Panc1 (cell line): ENCODE measurements at regions of chr10 and their contacts with region 1.

Region 1: DNA sequence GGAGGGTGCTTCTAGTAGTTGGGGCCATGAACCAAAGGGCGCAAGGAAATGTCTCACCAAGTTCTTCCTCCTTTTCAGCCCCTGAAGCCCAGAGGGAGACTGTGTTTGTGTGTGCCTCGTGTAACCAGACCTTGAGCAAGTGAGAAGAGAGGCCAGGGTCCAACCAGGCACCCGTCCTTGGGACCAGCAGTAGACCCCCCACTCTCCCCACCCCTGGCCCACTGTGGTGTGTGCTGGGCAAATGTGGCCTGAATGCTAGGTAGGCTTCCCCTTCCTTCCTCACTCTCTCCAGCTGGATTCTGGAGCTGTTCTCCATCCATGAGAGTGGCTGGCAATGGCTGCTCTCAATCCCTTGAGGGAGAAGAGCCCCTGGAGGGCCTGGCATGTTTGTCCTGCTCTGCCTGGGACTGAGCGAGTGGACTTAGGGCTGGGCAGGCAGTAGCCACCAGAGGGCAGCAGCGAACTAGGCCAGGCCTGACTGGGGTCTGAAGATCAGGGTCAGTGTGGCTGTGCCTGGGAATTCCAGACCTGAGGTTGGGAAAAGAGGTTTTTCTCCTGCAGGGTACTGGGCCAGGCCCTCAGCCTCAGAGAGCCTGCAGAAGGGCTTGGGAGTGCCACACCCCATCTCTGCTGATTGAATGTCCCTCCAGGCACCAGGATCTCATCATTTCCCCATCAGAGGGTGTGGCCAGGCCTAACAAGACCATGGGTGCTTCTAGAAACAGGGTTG is 12.5 kb downstream of the SFRP5 start:
- DNase-seq: peak; percentile 32
- ATAC-seq: peak; percentile 93
- H3K4me3 ChIP-seq: no peak overlapping the region
- H3K27ac ChIP-seq: no peak overlapping the region
- H3K4me1 ChIP-seq: no peaks in the 10 kb centered on the region
- H3K27me3 ChIP-seq: no peaks in the 10 kb centered on the region
- CTCF ChIP-seq: peak; percentile 98

Region 2: DNA sequence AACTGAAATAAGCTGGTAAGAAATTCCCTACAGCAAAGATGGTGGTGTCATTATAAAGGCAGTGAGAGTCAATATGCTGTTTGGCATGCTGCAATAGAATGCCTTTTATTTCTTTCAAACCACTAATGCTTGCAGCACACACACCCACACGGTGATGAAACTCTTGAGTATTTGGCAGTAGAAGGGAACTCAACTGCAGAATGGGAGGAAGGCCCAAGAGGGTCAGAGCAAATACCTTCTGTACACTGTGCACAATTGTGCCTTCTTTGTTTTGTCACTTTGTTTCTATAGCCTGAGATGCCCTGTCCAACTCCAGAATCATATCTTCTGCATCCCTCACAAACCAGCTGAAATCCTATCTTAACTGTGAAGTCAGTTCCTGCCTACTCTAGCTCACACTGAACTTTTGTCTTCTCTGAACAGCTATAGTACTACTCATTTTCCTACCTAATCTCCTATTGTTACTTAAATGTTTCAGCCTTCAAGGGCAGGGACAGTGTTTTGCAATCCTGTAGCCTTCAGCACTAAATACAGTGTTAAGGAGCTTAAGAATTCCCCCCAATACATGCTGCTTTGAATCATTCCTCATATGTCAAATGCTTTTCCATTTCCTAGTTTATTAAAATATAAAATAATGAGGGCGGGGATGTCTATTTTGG is 283.3 kb before region 1 on chr10:
- CTCF ChIA-PET with region 1: no interaction called
- POLR2A ChIA-PET with region 1: interaction called, 10 read pairs
- in situ Hi-C with region 1: no loop called
- intact Hi-C with region 1: no loop called
- DNase-seq: no peak
- ATAC-seq: no peak
- H3K4me3 ChIP-seq: no peak overlapping the region
- H3K27ac ChIP-seq: no peak overlapping the region
- H3K4me1 ChIP-seq: peaks cover 5% of the 10 kb centered on the region; the same call in 1 of the 2 replicates
- H3K27me3 ChIP-seq: no peaks in the 10 kb centered on the region
- CTCF ChIP-seq: no peak

Region 3: GRCh38 chr10:97659589-97659988 is 99.7 kb before region 1 on chr10:
- CTCF ChIA-PET with region 1: interaction called, 11 read pairs
- POLR2A ChIA-PET with region 1: no interaction called
- in situ Hi-C with region 1: no loop called
- intact Hi-C with region 1: no loop called
- DNase-seq: no peak
- ATAC-seq: no peak
- H3K4me3 ChIP-seq: no peak overlapping the region
- H3K27ac ChIP-seq: no peak overlapping the region
- H3K4me1 ChIP-seq: no peaks in the 10 kb centered on the region
- H3K27me3 ChIP-seq: no peaks in the 10 kb centered on the region
- CTCF ChIP-seq: no peak

Region 4: GRCh38 chr10:97869091-97870042 is 110.0 kb after region 1 on chr10:
- CTCF ChIA-PET with region 1: no interaction called
- POLR2A ChIA-PET with region 1: no interaction called
- in situ Hi-C with region 1: no loop called
- intact Hi-C with region 1: loop called (anchors 1 kb)
- DNase-seq: peak; percentile 72
- ATAC-seq: peak; percentile 98
- H3K4me3 ChIP-seq: peak overlapping the region in 1 of 2 experiments; percentile 6; a peak in 1 of 4 replicates
- H3K27ac ChIP-seq: peak overlapping the region; percentile 39
- H3K4me1 ChIP-seq: peaks cover 15% of the 10 kb centered on the region
- H3K27me3 ChIP-seq: peaks cover 2% of the 10 kb centered on the region; the same call in 1 of the 2 replicates
- CTCF ChIP-seq: peak; percentile 90